ENCODE measurements at regions of chr9 and their contacts with region 1.

Region 1: DNA sequence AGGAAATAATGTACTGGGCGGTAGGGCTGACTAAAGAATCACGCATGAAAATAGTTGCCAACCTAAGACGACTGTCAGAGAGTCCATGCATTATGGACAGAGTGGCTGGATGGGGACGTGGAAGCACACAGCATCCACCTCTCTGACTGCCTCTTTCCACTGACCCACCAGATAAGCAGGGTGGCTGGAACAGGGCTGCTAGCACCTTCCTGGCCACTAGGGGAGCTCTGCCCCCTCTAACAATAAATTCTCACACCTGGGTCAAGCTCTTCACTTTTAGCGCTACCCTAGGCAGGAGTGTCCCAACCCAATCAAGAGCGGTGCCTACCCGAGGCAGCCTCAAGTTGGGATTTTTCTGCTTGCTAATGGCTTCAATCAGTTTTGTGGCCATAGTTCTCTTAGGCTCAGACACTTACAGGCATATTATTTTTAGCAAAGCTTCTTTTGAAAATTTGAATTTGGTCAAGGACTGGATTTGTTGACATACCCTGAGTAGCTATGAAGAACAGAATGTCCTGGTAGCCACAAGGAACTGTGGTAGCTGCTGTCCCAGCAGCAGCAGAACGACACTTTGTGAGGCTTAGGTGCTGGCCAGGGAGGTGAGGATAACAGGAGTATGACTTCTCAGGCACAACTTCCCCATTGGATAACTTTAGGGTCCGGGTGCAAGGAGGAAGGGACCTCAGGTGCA is 6.9 kb upstream of the TPM2 start:
- DNase-seq: no peak
- H3K4me3 ChIP-seq: no peak overlapping the region
- CTCF ChIP-seq: peak; percentile 78

Region 2: GRCh38 chr9:35135988-35136387 is 560.7 kb before region 1 on chr9:
- CTCF ChIA-PET with region 1: no interaction called
- POLR2A ChIA-PET with region 1: no interaction called
- DNase-seq: no peak
- H3K4me3 ChIP-seq: no peak overlapping the region
- CTCF ChIP-seq: no peak

Region 3: DNA sequence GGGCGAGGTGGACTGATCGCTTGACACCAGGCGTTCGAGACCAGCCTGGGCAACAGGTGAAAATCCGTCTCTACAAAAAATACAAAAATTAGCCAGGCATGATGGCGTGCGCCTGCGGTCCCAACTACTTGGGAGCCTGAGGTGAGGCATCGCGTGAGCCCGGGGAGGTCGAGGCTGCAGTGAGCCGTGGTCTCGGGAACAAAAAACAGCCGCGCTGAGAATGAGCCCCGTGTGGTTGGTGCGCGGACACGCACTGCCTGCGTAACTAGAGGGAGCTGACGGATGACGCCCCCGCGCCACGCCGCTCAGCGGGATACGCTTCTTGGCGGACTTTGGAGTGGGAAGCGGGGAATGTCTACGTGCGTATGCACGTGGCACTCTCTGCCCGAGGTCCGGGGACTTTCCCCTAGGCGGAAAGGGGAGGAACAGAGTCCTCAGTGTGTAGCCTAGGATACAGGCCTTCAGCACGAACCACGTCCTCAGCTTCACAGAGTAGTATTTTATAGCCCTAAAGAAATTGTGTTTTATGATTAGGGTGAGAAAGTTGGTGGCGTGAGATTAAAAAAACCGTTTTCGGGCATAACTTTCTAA is 39.0 kb before region 1 on chr9 and contains the start of gene RMRP:
- CTCF ChIA-PET with region 1: interaction called, 54 read pairs
- POLR2A ChIA-PET with region 1: interaction called, 39 read pairs
- DNase-seq: peak; percentile 99
- H3K4me3 ChIP-seq: peak within 1 kb of the TSS; percentile 97
- CTCF ChIP-seq: peak; percentile 42

Region 4: GRCh38 chr9:35664531-35665470 is 31.9 kb before region 1 on chr9 and contains the start of gene ARHGEF39:
- CTCF ChIA-PET with region 1: interaction called, 54 read pairs
- POLR2A ChIA-PET with region 1: interaction called, 6 read pairs
- DNase-seq: no peak
- H3K4me3 ChIP-seq: peak within 1 kb of the TSS; percentile 71
- CTCF ChIP-seq: peak; percentile 31

Region 5: GRCh38 chr9:35682051-35682450 is 14.6 kb before region 1 on chr9:
- CTCF ChIA-PET with region 1: interaction called, 33 read pairs
- POLR2A ChIA-PET with region 1: interaction called, 68 read pairs
- DNase-seq: no peak
- H3K4me3 ChIP-seq: no peak overlapping the region
- CTCF ChIP-seq: no peak

Region 6: GRCh38 chr9:35716230-35716629 is 19.6 kb after region 1 on chr9:
- CTCF ChIA-PET with region 1: interaction called, 816 read pairs
- POLR2A ChIA-PET with region 1: interaction called, 16 read pairs
- DNase-seq: no peak
- H3K4me3 ChIP-seq: no peak overlapping the region
- CTCF ChIP-seq: no peak

Region 7: GRCh38 chr9:35748858-35749514 is 52.3 kb after region 1 on chr9 and contains the starts of genes GBA2 and RGP1:
- CTCF ChIA-PET with region 1: interaction called, 13 read pairs
- POLR2A ChIA-PET with region 1: no interaction called
- DNase-seq: no peak
- H3K4me3 ChIP-seq: peak within 1 kb of the TSS; percentile 89
- CTCF ChIP-seq: no peak

Region 8: DNA sequence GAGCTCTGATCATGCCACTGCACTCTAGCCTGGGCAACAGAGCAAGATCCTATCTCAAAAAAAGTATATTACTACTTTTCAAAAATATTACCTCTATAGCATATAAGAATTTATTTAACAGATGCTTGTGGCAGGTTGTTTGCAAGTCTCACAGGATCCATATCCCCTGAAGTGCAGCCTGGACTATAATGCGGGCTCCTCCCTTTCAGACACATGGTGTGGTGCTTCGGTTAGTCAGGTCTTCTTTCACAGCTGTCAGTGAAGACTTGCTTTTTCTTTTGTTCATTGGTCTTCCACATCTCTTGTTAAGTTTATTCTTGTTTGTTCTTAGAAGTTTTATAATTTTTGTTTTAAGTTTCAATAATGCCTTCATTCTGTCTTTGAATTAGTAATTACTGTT is 199.9 kb after region 1 on chr9:
- CTCF ChIA-PET with region 1: no interaction called
- POLR2A ChIA-PET with region 1: no interaction called
- DNase-seq: no peak
- H3K4me3 ChIP-seq: no peak overlapping the region
- CTCF ChIP-seq: no peak

Measured in AG04449 (cell line).